ENCODE measurements at regions of chr9 and their contacts with region 1.

Region 1: GRCh38 chr9:35844716-35845270 is 15.8 kb downstream of the TMEM8B start:
- DNase-seq: no peak
- H3K4me3 ChIP-seq: no peak overlapping the region
- H3K27ac ChIP-seq: peak overlapping the region in 7 of 8 donors; percentile 24 to 64 (median 43)
- H3K4me1 ChIP-seq: peaks cover 29 to 87% (median 62%) of the 10 kb centered on the region in 6 donors
- H3K27me3 ChIP-seq: peaks cover 0 to 30% (median 0%) of the 10 kb centered on the region in 7 donors
- CTCF ChIP-seq: no peak
- POLR2A ChIP-seq: no peak

Region 2: GRCh38 chr9:35385042-35385441 is 459.8 kb before region 1 on chr9:
- intact Hi-C with region 1: no loop called
- DNase-seq: no peak
- H3K4me3 ChIP-seq: no peak overlapping the region
- H3K27ac ChIP-seq: no peak overlapping the region
- H3K4me1 ChIP-seq: no peaks in the 10 kb centered on the region
- H3K27me3 ChIP-seq: no peaks in the 10 kb centered on the region
- CTCF ChIP-seq: no peak
- POLR2A ChIP-seq: no peak

Region 3: DNA sequence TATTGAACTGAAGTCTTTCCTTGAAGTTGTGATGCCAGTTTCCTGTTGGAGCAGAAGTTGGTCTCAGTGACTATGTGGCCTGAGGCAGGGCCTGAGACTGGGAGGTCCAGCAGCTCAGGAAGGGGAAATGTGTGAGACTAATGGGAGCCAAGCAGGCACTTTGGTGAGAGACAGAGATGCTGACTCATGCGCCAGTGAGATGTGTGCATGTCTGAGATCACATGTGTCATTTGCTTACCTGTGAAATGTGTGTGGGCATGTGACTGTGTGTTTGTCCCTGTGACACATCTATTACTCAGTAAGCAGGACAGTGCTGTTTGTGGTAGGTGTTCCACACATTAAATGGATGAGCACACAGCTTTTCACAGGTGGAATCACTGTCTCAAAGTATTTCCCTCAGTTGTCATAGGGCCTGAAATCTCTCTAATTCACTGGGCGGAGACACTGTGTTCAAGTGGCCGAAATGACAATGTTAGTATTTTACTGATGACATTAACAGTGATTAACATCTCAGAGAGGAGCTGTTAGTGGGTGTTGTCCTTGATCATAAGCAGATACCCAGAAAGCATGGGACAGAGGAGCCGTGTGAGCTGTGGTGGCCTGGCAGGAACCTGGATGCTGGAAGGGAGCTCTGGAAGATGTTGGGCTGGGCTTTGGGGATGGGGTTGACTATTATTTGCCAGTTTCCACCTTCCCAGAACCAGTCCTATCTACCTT is 46.0 kb before region 1 on chr9:
- intact Hi-C with region 1: no loop called
- DNase-seq: no peak
- H3K4me3 ChIP-seq: no peak overlapping the region
- H3K27ac ChIP-seq: no peak overlapping the region
- H3K4me1 ChIP-seq: no peaks in the 10 kb centered on the region
- H3K27me3 ChIP-seq: no peaks in the 10 kb centered on the region
- CTCF ChIP-seq: no peak
- POLR2A ChIP-seq: no peak

Region 4: DNA sequence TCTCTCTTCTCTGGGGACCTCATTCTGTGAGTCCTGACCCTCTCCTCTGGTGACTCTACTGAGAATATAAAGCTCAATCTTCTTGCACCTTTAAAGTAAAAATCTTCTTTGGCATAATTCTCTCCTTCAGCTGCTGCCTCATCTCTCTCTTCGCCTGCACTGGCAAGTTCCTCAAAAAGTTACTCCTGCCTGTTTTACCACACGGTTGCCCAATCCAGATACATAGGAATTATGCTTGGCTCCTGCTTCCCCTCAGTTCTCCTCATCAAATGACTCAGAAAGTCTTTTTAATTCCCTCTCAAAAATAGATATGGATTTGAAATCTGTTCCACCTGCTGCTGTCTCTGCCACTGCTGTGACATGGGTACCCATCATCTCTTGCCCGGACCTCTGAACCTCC is 46.9 kb after region 1 on chr9:
- intact Hi-C with region 1: loop called (anchors 10 kb)
- DNase-seq: no peak
- H3K4me3 ChIP-seq: no peak overlapping the region
- H3K27ac ChIP-seq: no peak overlapping the region
- H3K4me1 ChIP-seq: no peaks in the 10 kb centered on the region
- H3K27me3 ChIP-seq: peaks cover 0 to 37% (median 0%) of the 10 kb centered on the region in 7 donors
- CTCF ChIP-seq: no peak
- POLR2A ChIP-seq: no peak